ENCODE measurements at regions of chr19 and their contacts with region 1.

Region 1: DNA sequence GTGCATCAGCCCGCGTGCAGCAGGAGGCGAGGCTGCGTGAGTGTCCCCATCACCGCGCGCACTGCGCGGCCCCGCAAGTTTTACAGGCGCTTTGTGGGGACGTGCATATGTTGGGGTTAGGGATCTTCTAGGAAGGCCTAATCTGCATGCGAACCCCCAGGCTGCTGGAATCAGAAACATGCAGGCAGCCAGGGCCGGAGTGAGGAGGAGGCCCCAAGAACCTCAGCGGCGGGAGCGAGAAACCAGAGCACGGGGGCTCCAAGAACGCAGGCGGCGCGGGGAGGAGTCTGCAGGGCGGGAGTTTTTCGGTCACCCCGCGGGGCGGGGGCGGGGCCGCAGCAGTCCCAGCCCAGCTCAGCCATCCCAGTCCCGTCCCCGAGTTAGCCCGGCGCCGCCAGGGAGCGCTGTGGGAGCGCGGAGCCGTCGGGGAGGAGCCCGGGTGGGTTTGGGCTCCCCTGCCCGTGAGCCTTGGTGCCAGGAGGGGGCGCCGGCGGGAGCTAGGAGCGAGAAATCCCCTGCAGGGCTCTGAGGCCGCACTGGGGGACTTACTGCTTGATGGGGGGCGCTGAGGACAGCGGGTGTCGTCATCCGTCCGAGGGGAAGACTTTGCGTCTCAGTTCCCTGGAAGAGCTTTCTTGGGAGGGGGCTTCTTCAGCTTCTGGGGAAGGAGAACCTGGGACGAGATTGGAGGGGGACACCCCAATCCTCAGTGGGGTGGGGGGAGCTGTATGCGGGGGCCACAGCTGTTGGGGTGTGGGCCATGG is 933 bp upstream of the NRTN start:
- DNase-seq: peak; percentile 10
- H3K4me3 ChIP-seq: peak overlapping the region; percentile 49
- CTCF ChIP-seq: peak; percentile 100

Region 2: GRCh38 chr19:5775668-5776309 is 28.1 kb before region 1 on chr19:
- CTCF ChIA-PET with region 1: interaction called, 11 read pairs
- POLR2A ChIA-PET with region 1: no interaction called
- DNase-seq: no peak
- H3K4me3 ChIP-seq: no peak overlapping the region
- CTCF ChIP-seq: no peak

Region 3: GRCh38 chr19:5827891-5828660 is 24.1 kb after region 1 on chr19:
- CTCF ChIA-PET with region 1: interaction called, 23 read pairs
- POLR2A ChIA-PET with region 1: interaction called, 4 read pairs
- DNase-seq: peak; percentile 17
- H3K4me3 ChIP-seq: peak overlapping the region; percentile 76
- CTCF ChIP-seq: no peak

Region 4: GRCh38 chr19:5891938-5892771 is 88.2 kb after region 1 on chr19:
- CTCF ChIA-PET with region 1: interaction called, 100 read pairs
- POLR2A ChIA-PET with region 1: interaction called, 3 read pairs
- DNase-seq: no peak
- H3K4me3 ChIP-seq: no peak overlapping the region
- CTCF ChIP-seq: peak; percentile 93

Region 5: GRCh38 chr19:5926641-5927440 is 122.9 kb after region 1 on chr19:
- CTCF ChIA-PET with region 1: interaction called, 13 read pairs
- POLR2A ChIA-PET with region 1: no interaction called
- DNase-seq: no peak
- H3K4me3 ChIP-seq: no peak overlapping the region
- CTCF ChIP-seq: no peak

Region 6: GRCh38 chr19:6021878-6022569 is 218.1 kb after region 1 on chr19:
- CTCF ChIA-PET with region 1: interaction called, 42 read pairs
- POLR2A ChIA-PET with region 1: no interaction called
- DNase-seq: no peak
- H3K4me3 ChIP-seq: no peak overlapping the region
- CTCF ChIP-seq: peak; percentile 78